ENCODE measurements at regions of chr12 and their contacts with region 1.

Region 1: GRCh38 chr12:104494137-104494792 is 37.5 kb downstream of the CHST11 start:
- DNase-seq: no peak
- H3K4me3 Mint-ChIP-seq: peak overlapping the region; percentile 64
- H3K27ac Mint-ChIP-seq: peak overlapping the region; percentile 89
- H3K4me1 Mint-ChIP-seq: peaks cover 92% of the 10 kb centered on the region
- H3K27me3 Mint-ChIP-seq: no peaks in the 10 kb centered on the region

Region 2: GRCh38 chr12:104381731-104382480 is 112.4 kb before region 1 on chr12:
- intact Hi-C with region 1: loop called (anchors 5 kb)
- DNase-seq: peak; percentile 69
- H3K4me3 Mint-ChIP-seq: peak overlapping the region; percentile 52
- H3K27ac Mint-ChIP-seq: peak overlapping the region; percentile 33
- H3K4me1 Mint-ChIP-seq: peaks cover 20% of the 10 kb centered on the region
- H3K27me3 Mint-ChIP-seq: peaks cover 2% of the 10 kb centered on the region

Region 3: GRCh38 chr12:104462931-104463339 is 31.3 kb before region 1 on chr12:
- intact Hi-C with region 1: loop called (anchors 1 kb)
- DNase-seq: peak; percentile 46
- H3K4me3 Mint-ChIP-seq: peak overlapping the region; percentile 83
- H3K27ac Mint-ChIP-seq: peak overlapping the region; percentile 96
- H3K4me1 Mint-ChIP-seq: peaks cover 85% of the 10 kb centered on the region
- H3K27me3 Mint-ChIP-seq: no peaks in the 10 kb centered on the region

Region 4: DNA sequence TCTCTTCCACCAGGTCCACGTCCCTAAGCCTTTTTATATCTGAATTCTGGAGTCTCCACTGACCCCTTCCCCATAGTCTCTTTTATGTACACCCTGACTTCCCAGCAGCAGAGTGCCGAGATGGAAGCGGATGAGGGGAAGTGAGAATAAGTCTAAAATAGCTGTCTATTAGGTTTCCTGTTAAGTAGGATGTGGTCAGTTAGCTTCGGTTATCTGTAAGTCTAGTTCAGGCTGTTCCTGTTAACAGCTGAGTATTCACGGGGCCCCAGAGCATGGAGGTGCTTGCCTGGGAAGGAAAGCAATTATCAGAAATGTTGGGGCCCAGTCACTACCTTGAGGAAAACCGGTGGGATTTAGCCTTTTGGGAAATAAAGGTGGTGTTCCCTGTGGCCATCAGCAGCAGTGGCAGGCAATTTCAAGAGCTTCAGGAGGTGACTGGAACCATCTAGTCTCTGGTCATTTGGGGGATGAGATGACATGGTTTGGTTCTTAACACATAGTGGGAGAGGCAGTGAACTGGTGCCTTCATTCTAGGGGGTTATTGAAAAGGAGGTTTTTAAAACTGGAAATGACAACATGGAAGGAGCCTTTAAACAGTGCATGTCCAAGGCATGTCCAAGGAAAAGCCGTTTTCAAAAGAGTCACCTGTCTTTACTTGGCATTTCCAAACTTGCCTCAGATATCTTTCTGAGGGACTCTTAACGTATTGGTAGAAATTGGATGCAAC is 15.7 kb before region 1 on chr12:
- intact Hi-C with region 1: loop called (anchors 2 kb)
- DNase-seq: no peak
- H3K4me3 Mint-ChIP-seq: peak overlapping the region; percentile 89
- H3K27ac Mint-ChIP-seq: peak overlapping the region; percentile 98
- H3K4me1 Mint-ChIP-seq: peaks cover 90% of the 10 kb centered on the region
- H3K27me3 Mint-ChIP-seq: no peaks in the 10 kb centered on the region

Region 5: GRCh38 chr12:104507672-104508071 is 13.4 kb after region 1 on chr12:
- intact Hi-C with region 1: loop called (anchors 2 kb)
- DNase-seq: no peak
- H3K4me3 Mint-ChIP-seq: no peak overlapping the region
- H3K27ac Mint-ChIP-seq: no peak overlapping the region
- H3K4me1 Mint-ChIP-seq: peaks cover 84% of the 10 kb centered on the region
- H3K27me3 Mint-ChIP-seq: no peaks in the 10 kb centered on the region

Region 6: DNA sequence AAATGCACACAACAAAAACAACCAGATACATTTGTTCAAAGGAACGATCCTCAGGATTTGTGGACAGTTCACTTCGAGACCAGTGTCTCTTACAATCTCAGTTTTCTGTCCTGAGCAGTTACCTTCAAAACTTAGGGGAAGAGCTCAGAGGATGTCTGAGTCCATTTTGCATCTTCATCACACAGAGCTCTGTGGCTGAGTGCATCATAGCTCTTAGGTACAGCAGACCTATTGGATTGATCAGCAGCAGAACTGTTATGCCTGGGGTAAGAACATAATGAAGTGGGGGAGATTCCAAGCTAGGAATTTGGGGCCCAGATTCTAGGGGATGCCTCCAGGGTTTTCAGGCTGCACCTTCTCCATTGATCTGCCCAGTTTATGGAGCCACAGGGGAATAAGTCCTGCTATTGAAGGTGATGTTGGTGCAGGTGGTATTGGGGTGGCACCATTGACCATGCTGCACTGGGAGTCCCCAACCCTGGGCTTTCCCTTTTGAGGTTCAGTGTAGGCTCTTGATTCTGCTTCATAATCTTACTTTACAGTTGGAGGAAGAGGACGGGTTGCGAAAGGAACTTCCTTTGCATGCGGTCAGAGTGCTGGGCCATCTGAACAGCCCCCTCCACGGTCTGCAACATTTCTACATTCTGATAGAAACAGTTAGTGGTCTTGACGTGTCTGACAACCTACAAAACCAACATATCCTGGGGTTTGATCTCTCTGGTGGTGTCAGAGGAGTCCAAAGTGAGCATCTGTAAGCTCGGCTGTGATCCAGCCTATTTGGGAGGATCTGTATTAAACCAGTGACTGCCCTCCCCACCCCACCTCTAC is 75.3 kb after region 1 on chr12:
- intact Hi-C with region 1: loop called (anchors 1 kb)
- DNase-seq: peak; percentile 58
- H3K4me3 Mint-ChIP-seq: peak overlapping the region; percentile 64
- H3K27ac Mint-ChIP-seq: peak overlapping the region; percentile 89
- H3K4me1 Mint-ChIP-seq: peaks cover 63% of the 10 kb centered on the region
- H3K27me3 Mint-ChIP-seq: no peaks in the 10 kb centered on the region

Region 7: GRCh38 chr12:104582739-104583138 is 88.5 kb after region 1 on chr12:
- intact Hi-C with region 1: no loop called
- DNase-seq: no peak
- H3K4me3 Mint-ChIP-seq: no peak overlapping the region
- H3K27ac Mint-ChIP-seq: no peak overlapping the region
- H3K4me1 Mint-ChIP-seq: peaks cover 83% of the 10 kb centered on the region
- H3K27me3 Mint-ChIP-seq: no peaks in the 10 kb centered on the region

Measured in activated T-helper 1 cell treated with anti-CD3 and anti-CD28 coated beads, Interleukin-12 subunit alpha, Interleukin-12 subunit beta, Interleukin-2, Interleukin-4 antibody, amounts not matched to agents 30 ng/mL and 10 ng/mL and 1 ng/mL, durations not matched to agents 14 hours and 24 hours and 36 hours (primary cell).